ENCODE measurements at regions of chr1 and their contacts with region 1.

Region 1: DNA sequence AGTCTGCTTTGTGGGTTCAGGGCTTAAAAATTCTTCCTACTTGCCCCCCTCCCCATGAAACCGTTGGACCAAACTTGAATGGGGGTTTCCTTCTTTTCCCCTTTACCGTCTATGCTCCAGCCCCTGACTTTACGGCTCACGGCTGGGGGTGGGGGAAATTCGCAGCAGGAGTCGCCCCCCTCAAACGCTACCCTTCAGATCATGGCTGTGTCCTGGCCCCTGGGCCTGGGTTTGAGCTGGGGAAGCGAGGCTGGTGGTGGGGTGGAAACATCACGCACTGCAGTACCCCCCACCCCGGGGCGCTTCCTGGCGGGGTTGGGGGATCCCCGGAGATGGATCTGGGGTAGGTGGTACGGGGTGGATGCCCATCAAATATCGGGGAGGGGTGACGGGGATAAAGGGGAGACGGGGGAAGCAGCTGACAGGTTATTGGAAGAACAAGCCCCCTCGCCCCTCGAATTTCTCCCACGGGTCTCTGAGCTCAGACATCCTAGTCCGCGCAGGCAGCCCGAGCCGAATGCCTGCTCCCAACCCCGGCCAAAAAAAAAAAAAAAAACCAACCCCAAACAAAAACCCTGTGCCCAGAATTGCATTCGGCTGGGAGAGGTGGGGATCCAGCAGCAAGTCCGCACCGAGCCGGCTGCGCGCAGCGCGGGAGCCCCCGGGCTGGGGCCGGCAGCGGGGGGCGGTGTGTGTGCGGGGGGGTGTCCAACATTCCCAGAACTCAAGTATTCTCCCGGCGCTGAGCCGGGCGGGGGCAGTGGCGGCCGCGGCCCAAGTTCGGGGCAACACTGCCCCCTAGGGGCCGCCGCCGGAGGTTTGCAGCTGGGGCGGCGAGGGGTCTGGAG is 59.0 kb upstream of the ACOT11 start:
- DNase-seq: no peak
- H3K4me3 ChIP-seq: peak overlapping the region; percentile 52
- H3K27me3 ChIP-seq: no peaks in the 10 kb centered on the region
- CTCF ChIP-seq: peak; percentile 88

Region 2: DNA sequence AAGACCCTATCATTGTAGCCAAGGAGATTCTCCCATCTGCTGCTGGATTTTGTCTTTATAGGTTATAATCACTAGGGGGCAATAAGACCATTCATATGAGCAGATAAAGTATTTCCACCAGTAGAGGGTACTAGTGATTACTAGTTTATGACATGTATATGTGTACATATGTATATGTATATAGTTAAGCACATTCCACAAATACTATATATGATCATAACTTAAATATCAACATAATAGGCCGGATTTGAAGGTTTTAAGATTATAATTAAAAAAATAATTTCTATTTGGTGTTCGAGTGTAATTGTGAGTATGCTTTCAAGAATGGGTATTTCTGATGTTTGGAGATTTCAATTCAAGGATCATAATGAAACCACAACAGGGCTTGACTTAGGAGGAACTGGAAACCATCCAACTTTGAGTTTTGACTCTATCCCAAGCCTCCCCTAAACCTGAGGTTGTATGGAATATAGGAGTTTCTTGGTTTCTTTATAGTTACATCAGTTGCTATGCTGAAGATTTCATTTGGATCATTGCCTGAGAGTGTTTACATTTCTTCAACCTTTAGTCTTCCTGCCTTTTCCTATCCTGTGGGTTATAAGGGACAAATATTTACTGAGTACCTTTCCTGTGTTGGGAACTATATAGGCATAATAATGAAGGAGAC is 418.7 kb before region 1 on chr1:
- CTCF ChIA-PET with region 1: interaction called, 20 read pairs
- POLR2A ChIA-PET with region 1: interaction called, 3 read pairs
- DNase-seq: no peak
- H3K4me3 ChIP-seq: no peak overlapping the region
- H3K27me3 ChIP-seq: no peaks in the 10 kb centered on the region
- CTCF ChIP-seq: peak; percentile 77

Region 3: GRCh38 chr1:54220004-54220811 is 268.8 kb before region 1 on chr1:
- CTCF ChIA-PET with region 1: interaction called, 15 read pairs
- POLR2A ChIA-PET with region 1: interaction called, 11 read pairs
- DNase-seq: no peak
- H3K4me3 ChIP-seq: no peak overlapping the region
- H3K27me3 ChIP-seq: no peaks in the 10 kb centered on the region
- CTCF ChIP-seq: no peak

Region 4: GRCh38 chr1:54273092-54273794 is 215.8 kb before region 1 on chr1:
- CTCF ChIA-PET with region 1: interaction called, 39 read pairs
- POLR2A ChIA-PET with region 1: interaction called, 12 read pairs
- DNase-seq: no peak
- H3K4me3 ChIP-seq: no peak overlapping the region
- H3K27me3 ChIP-seq: no peaks in the 10 kb centered on the region
- CTCF ChIP-seq: peak; percentile 87

Region 5: DNA sequence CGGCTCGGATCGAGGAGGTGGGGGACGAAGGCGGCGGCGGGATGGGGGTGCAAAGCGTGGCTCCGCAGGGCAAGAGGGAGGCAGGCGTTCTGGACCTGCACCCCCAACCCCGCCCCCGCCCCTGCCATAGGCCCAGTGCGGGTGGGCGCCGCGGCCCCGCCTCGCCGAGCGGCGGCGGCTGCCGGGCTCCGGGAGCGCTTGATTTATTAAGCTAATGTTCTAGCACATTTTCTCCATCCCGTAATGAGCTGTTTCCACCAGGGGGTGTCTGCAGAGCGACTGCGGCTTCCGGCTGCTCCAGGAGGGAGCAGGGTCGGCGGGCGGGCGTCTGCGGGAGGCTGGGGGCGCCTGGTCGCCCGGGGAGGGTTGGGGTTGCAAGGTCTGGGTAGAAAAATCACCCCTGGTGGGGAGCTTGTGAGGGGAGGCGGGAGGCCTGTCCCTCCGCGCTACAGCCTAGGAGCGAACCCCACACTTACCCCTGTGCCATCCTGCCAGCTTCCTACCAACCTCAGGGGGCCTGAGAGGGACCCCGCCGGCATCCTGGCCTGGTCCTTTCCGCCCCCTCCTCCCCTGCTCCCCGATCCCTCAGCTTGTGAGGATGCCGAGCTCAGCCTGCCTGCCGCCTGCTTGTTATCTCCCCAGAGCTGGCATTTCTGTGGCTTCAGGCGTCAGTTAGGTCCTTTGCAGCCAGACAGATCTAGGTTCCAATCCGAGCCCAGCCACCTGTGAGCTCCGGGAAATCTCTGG is 10.5 kb after region 1 on chr1:
- CTCF ChIA-PET with region 1: interaction called, 21 read pairs
- POLR2A ChIA-PET with region 1: no interaction called
- DNase-seq: no peak
- H3K4me3 ChIP-seq: peak overlapping the region; percentile 37
- H3K27me3 ChIP-seq: peaks cover 8% of the 10 kb centered on the region
- CTCF ChIP-seq: peak; percentile 52

Region 6: DNA sequence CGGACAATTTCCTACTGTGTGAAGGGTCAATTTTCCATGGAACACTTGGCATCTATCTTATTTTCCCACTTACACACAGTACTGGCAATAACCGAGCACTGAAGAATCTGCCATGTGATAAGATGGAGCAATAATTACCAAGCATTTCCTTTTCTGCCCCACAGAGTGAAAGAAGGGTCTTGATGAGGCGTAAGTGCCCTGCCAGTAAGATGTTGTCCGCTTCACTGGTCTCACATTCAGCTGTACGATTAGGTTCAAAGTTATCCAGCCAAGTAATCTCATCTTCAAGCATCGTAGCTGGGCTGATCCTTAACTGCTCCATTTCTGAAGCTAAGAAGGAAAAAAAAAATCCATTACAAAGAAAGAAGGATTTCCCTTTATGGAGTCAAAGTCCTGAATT is 618.1 kb after region 1 on chr1:
- CTCF ChIA-PET with region 1: no interaction called
- POLR2A ChIA-PET with region 1: no interaction called
- DNase-seq: no peak
- H3K4me3 ChIP-seq: no peak overlapping the region
- H3K27me3 ChIP-seq: no peaks in the 10 kb centered on the region
- CTCF ChIP-seq: no peak